H1 (cell line): ENCODE measurements at regions of chr3 and their contacts with region 1.

Region 1: DNA sequence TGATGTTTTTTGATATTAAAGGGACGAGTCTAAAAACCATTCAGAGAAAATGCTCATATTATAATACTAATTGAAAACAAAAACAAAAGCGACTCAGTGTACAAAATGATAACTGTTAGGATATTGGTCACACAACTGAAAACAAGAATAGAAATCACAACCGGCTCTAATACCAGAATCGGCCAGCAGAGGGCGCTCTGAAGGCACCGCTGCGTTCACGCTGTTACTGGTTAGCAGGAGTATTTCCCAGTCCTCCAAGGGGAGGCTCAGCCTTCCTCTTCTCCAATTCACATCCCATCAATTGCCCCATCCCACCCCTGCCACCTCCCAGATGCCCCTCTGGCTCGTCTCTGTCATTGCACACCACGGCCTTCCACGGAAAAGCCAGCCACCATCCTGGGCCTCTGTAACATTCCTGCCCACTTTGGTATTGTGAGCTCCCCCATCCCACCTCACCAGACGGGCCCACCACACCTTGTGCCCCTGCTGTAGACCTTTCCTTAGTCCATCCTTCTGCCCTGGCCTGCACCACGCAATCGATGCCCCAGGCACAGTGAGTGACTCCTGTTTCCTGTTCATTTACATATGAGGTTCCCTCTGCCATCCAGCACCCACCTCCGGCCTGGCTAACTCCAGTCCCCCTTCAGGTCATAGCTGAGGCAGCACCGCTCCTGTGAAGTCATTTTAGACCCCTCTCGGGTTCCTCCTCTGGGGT is 8.5 kb downstream of the FAM107A start:
- DNase-seq: peak in 1 of 2 experiments; percentile 95
- H3K4me3 ChIP-seq: no peak overlapping the region
- H3K27ac ChIP-seq: no peak overlapping the region
- H3K4me1 ChIP-seq: peaks cover 6 to 22% (median 16%) of the 10 kb centered on the region in 4 experiments
- H3K27me3 ChIP-seq: peaks cover 0 to 2% (median 0%) of the 10 kb centered on the region in 4 experiments; a peak in 2 of 7 replicates
- CTCF ChIP-seq: peak; percentile 85 to 96 (median 87)
- EP300 ChIP-seq: no peak
- POLR2A ChIP-seq: no peak
- RAD21 ChIP-seq: peak; percentile 82 to 87

Region 2: DNA sequence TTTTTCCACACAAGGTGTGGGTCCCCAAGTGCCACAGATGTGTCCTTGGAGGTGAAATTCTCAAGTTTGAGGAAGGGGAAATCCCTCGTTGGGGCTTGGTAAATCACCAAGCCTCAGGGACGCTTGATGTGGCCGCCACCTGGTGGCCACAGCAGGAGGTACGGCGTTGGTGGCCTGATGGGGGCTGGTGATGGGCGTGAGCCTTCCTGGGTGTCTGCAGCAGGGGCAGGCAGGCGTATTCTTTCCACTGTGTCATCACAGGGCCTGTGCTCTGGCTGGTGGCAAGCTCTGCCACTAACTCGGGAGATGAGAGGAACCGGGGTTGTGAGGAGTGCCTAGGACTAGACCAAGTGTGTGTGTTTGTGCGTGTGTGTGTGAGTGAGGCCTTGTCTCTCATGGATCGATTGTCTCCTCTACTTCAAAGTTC is 35.9 kb before region 1 on chr3:
- CTCF ChIA-PET with region 1: interaction called, 19 read pairs
- POLR2A ChIA-PET with region 1: no interaction called
- DNase-seq: peak; percentile 51 to 84
- H3K4me3 ChIP-seq: no peak overlapping the region
- H3K27ac ChIP-seq: no peak overlapping the region
- H3K4me1 ChIP-seq: peaks cover 0 to 3% (median 2%) of the 10 kb centered on the region in 4 experiments; a peak in 4 of 7 replicates
- H3K27me3 ChIP-seq: no peaks in the 10 kb centered on the region
- CTCF ChIP-seq: peak; percentile 82 to 85 (median 85)
- EP300 ChIP-seq: no peak
- POLR2A ChIP-seq: no peak
- RAD21 ChIP-seq: peak; percentile 82 to 85

Region 3: GRCh38 chr3:58591517-58592510 is 23.1 kb after region 1 on chr3:
- CTCF ChIA-PET with region 1: interaction called, 201 read pairs
- POLR2A ChIA-PET with region 1: no interaction called
- DNase-seq: no peak
- H3K4me3 ChIP-seq: no peak overlapping the region
- H3K27ac ChIP-seq: no peak overlapping the region
- H3K4me1 ChIP-seq: peaks cover 0 to 7% (median 4%) of the 10 kb centered on the region in 4 experiments; a peak in 5 of 7 replicates
- H3K27me3 ChIP-seq: peaks cover 0 to 6% (median 5%) of the 10 kb centered on the region in 4 experiments; a peak in 5 of 7 replicates
- CTCF ChIP-seq: no peak
- EP300 ChIP-seq: no peak
- POLR2A ChIP-seq: no peak
- RAD21 ChIP-seq: no peak

Region 4: GRCh38 chr3:58608648-58609047 is 39.9 kb after region 1 on chr3:
- CTCF ChIA-PET with region 1: interaction called, 23 read pairs
- POLR2A ChIA-PET with region 1: no interaction called
- DNase-seq: no peak
- H3K4me3 ChIP-seq: no peak overlapping the region
- H3K27ac ChIP-seq: no peak overlapping the region
- H3K4me1 ChIP-seq: no peaks in the 10 kb centered on the region
- H3K27me3 ChIP-seq: no peaks in the 10 kb centered on the region
- CTCF ChIP-seq: no peak
- EP300 ChIP-seq: no peak
- POLR2A ChIP-seq: no peak
- RAD21 ChIP-seq: no peak

Region 5: GRCh38 chr3:58623961-58624360 is 55.2 kb after region 1 on chr3:
- CTCF ChIA-PET with region 1: interaction called, 994 read pairs
- POLR2A ChIA-PET with region 1: interaction called, 4 read pairs
- DNase-seq: no peak
- H3K4me3 ChIP-seq: no peak overlapping the region
- H3K27ac ChIP-seq: no peak overlapping the region
- H3K4me1 ChIP-seq: no peaks in the 10 kb centered on the region
- H3K27me3 ChIP-seq: no peaks in the 10 kb centered on the region
- CTCF ChIP-seq: no peak
- EP300 ChIP-seq: no peak
- POLR2A ChIP-seq: no peak
- RAD21 ChIP-seq: no peak

Region 6: DNA sequence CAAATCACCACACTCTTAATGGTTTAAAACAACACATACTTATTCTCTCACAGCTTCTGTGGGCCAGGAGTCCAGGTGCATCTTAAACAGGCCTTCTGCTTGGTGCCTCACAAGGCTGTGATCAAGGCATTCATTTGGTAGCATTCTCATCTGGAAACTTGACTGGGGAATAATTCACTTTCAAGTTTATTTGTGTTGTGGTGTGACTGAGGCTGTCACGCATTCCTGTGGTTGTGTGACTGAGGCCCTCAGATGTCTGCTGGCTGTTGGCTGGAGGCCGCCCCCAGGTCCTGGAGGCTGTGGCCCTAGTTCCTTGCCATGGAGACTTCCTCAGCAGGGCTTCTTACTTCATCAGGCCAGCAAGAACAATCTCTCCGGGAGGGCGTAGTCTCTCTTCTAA is 114.7 kb after region 1 on chr3:
- CTCF ChIA-PET with region 1: no interaction called
- POLR2A ChIA-PET with region 1: no interaction called
- DNase-seq: no peak
- H3K4me3 ChIP-seq: no peak overlapping the region
- H3K27ac ChIP-seq: no peak overlapping the region
- H3K4me1 ChIP-seq: no peaks in the 10 kb centered on the region; a peak in 1 of 7 replicates
- H3K27me3 ChIP-seq: no peaks in the 10 kb centered on the region
- CTCF ChIP-seq: no peak
- EP300 ChIP-seq: no peak
- POLR2A ChIP-seq: no peak
- RAD21 ChIP-seq: no peak